ENCODE measurements at regions of chr14 and their contacts with region 1.

Region 1: DNA sequence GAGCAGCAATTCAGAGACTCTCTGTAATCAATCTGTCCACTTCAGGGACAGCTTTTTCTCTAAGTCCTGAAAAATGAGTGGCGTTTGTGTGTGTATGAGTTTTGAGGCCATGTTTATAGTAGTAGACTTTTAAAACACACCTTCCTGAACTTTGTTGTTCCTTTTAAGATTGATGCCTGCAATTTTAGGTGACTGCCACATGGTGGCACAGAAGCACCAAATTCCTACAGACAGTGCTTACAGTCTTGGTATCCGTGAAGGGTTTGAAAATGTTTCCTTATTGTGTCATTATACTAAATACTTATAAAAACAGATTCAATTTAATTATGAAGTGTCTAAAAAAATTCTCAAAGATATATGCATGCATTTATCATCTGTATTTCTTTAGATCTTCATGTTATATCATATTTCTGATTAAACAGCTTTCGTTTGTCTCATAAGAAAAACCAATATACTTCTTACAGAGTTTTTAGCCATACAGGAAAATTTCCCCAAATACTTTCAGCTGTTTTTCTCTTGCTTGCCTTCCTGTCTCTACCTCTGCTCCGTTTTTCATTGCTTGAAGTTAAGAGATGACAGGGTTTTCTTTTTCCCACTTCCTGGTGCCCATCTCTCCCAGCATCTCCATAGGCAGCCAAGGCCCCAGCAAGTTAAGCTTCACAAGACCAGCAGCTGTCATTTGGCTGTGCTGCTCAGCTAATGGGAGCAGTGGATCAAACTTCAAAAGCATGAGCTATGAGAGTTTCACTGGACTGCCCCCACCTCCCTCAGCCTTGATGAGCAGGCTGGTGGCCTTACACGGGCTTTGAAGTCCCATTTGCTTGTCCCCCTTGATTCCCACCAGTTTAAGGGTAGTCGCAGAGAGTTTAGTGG is 259.6 kb downstream of the AKAP6 start:
- DNase-seq: peak; percentile 21
- H3K4me3 ChIP-seq: no peak overlapping the region
- H3K27ac ChIP-seq: no peak overlapping the region
- H3K4me1 ChIP-seq: peaks cover 15% of the 10 kb centered on the region
- H3K27me3 ChIP-seq: no peaks in the 10 kb centered on the region
- CTCF ChIP-seq: peak; percentile 80

Region 2: GRCh38 chr14:32662211-32662610 is 73.5 kb after region 1 on chr14:
- CTCF ChIA-PET with region 1: no interaction called
- dilution Hi-C with region 1: no loop called
- in situ Hi-C with region 1: no loop called
- intact Hi-C with region 1: no loop called
- DNase-seq: peak; percentile 45
- H3K4me3 ChIP-seq: no peak overlapping the region
- H3K27ac ChIP-seq: no peak overlapping the region
- H3K4me1 ChIP-seq: peaks cover 2% of the 10 kb centered on the region
- H3K27me3 ChIP-seq: no peaks in the 10 kb centered on the region
- CTCF ChIP-seq: no peak

Region 3: GRCh38 chr14:32998433-32998832 is 409.7 kb after region 1 on chr14:
- CTCF ChIA-PET with region 1: no interaction called
- dilution Hi-C with region 1: no loop called
- in situ Hi-C with region 1: loop called in 1 of 2 experiments (anchors 25 kb)
- intact Hi-C with region 1: loop called (anchors 1 kb)
- DNase-seq: peak; percentile 9
- H3K4me3 ChIP-seq: no peak overlapping the region
- H3K27ac ChIP-seq: no peak overlapping the region
- H3K4me1 ChIP-seq: no peaks in the 10 kb centered on the region
- H3K27me3 ChIP-seq: no peaks in the 10 kb centered on the region
- CTCF ChIP-seq: peak; percentile 44 to 61